CD4-positive, alpha-beta T cell (primary cell): ENCODE measurements at regions of chr2 and their contacts with region 1.

Region 1: GRCh38 chr2:99201959-99202678 is 21.1 kb downstream of the MRPL30 start:
- DNase-seq: no peak
- ATAC-seq: no peak
- H3K4me3 ChIP-seq: no peak overlapping the region
- H3K4me3 Mint-ChIP-seq: no peak overlapping the region
- H3K27ac ChIP-seq: no peak overlapping the region
- H3K27ac Mint-ChIP-seq: peak overlapping the region; percentile 50
- H3K4me1 ChIP-seq: no peaks in the 10 kb centered on the region
- H3K4me1 Mint-ChIP-seq: peaks cover 6% of the 10 kb centered on the region
- H3K27me3 ChIP-seq: no peaks in the 10 kb centered on the region
- H3K27me3 Mint-ChIP-seq: no peaks in the 10 kb centered on the region
- CTCF ChIP-seq: no peak

Region 2: GRCh38 chr2:98869940-98870263 is 332.2 kb before region 1 on chr2:
- CTCF ChIA-PET with region 1: no interaction called
- POLR2A ChIA-PET with region 1: no interaction called
- intact Hi-C with region 1: loop called in 1 of 2 experiments (anchors 10 kb)
- DNase-seq: peak in 2 of 14 experiments; percentile 6 to 28
- ATAC-seq: no peak
- H3K4me3 ChIP-seq: no peak overlapping the region
- H3K4me3 Mint-ChIP-seq: no peak overlapping the region
- H3K27ac ChIP-seq: no peak overlapping the region
- H3K27ac Mint-ChIP-seq: no peak overlapping the region
- H3K4me1 ChIP-seq: no peaks in the 10 kb centered on the region
- H3K4me1 Mint-ChIP-seq: no peaks in the 10 kb centered on the region
- H3K27me3 ChIP-seq: no peaks in the 10 kb centered on the region
- H3K27me3 Mint-ChIP-seq: no peaks in the 10 kb centered on the region
- CTCF ChIP-seq: no peak

Region 3: DNA sequence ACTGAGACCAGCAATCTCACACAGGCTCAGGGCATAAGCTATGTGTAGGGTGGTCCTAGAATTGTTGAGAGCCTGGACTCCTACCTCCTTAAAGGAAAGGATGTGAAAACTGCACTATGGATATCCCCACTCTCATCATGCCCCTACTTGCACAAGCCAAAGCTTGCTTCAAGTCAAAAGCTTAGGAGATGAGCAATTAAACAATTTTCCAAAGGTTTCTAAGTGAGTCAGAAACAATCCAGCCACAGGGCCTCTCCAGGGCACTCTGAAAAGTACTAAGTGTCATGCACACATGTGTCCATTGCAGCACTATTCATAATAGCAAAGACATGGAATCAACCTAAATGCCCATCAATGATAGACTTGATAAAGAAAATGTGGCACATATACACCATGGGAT is 724.9 kb after region 1 on chr2:
- CTCF ChIA-PET with region 1: no interaction called
- POLR2A ChIA-PET with region 1: no interaction called
- intact Hi-C with region 1: no loop called
- DNase-seq: no peak
- ATAC-seq: no peak
- H3K4me3 ChIP-seq: no peak overlapping the region
- H3K4me3 Mint-ChIP-seq: no peak overlapping the region
- H3K27ac ChIP-seq: no peak overlapping the region
- H3K27ac Mint-ChIP-seq: no peak overlapping the region
- H3K4me1 ChIP-seq: no peaks in the 10 kb centered on the region
- H3K4me1 Mint-ChIP-seq: no peaks in the 10 kb centered on the region
- H3K27me3 ChIP-seq: no peaks in the 10 kb centered on the region
- H3K27me3 Mint-ChIP-seq: no peaks in the 10 kb centered on the region
- CTCF ChIP-seq: no peak